ENCODE measurements at regions of chr11 and their contacts with region 1.

Region 1: GRCh38 chr11:47552566-47553416 is at the start of gene CELF1:
- DNase-seq: peak; percentile 93 to 96 (median 94)
- ATAC-seq: peak; percentile 94 to 99 (median 98)
- H3K4me3 ChIP-seq: peak within 1 kb of the TSS; percentile 68 to 100 (median 90)
- H3K27ac ChIP-seq: peak within 1 kb of the TSS; percentile 81 to 96 (median 91)
- H3K4me1 ChIP-seq: peaks cover 6 to 49% (median 26%) of the 10 kb centered on the region in 12 donors
- H3K27me3 ChIP-seq: no peaks in the 10 kb centered on the region
- CTCF ChIP-seq: peak; percentile 81 to 98 (median 97)
- POLR2A ChIP-seq: peak in 1 of 2 donors; percentile 54
- total RNA-seq, gene CELF1: 63.3 to 111 (median 88.6) TPM

Region 2: DNA sequence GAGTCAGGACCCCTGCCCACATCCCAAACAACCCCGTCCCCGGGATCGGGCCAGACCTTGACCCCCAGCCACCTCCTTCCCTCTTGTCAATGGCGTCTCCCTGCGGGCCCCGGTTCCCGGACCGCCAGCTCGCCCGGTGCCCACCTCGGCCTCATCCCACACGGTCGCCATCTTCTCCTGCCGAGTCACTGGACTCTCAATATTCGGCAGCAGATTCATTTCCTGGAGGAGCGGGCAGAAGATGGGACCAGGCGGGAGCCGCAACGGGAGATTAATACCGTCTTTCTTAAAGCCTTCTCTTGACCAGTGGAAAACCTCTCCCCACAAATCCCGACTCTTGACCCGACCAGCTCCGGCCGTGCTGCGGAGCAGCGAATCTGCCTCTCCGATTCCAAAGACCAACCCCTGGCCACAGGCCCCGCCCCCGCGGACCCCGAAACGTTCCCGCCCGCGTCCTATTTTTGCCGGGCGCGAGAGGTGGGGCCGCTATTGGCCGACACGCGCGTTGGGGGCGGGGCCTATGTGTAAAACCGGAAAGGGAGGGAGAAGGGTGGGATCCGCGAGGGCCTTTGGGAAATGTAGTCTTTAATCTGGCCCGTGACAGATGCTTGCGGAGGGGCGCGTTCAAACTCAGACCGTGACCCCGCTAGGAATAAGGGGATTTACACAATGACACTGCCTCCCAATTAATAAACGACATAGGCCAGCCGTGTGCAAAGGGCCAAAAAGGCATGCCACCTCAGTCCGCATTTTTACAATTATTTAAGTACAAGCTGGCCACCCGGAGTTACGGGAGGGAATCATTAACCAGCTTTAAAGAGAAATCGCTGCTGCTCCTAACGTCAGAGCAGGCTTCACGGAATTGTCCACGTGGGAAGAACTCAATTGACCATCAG is 126.5 kb before region 1 on chr11 and contains the start of gene PSMC3:
- intact Hi-C with region 1: loop called in 1 of 10 experiments (anchors 2 kb)
- DNase-seq: peak; percentile 98 to 99 (median 99)
- ATAC-seq: peak; percentile 95 to 99 (median 97)
- H3K4me3 ChIP-seq: peak within 1 kb of the TSS; percentile 69 to 97 (median 84)
- H3K27ac ChIP-seq: peak within 1 kb of the TSS; percentile 81 to 96 (median 92)
- H3K4me1 ChIP-seq: peaks cover 5 to 25% (median 14%) of the 10 kb centered on the region in 12 donors
- H3K27me3 ChIP-seq: no peaks in the 10 kb centered on the region
- CTCF ChIP-seq: peak in 1 of 12 donors; percentile 5
- POLR2A ChIP-seq: peak in 1 of 2 donors; percentile 55
- total RNA-seq, gene PSMC3: 121 to 215 (median 151) TPM

Region 3: DNA sequence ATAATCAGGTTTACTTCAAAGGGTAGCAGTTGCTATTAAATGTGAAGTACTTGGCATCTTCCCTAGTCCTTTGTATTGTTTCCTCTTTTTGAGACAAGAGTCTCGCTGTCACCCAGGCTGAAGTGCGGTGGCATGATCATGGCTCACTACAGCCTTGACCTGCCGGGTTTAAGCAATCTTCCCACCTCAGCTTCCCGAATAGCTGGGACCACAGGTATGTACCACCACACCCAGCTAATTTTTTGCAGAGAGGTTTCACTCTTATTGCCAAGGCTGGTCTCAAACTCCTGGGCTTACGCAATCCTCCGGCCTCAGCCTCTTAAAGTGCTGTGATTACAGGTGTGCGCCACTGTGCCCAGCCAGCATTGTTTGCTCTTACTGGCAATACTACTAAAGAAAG is 67.7 kb before region 1 on chr11:
- intact Hi-C with region 1: loop called in 4 of 10 experiments (anchors 5 to 10 kb)
- DNase-seq: no peak
- ATAC-seq: no peak
- H3K4me3 ChIP-seq: no peak overlapping the region
- H3K27ac ChIP-seq: no peak overlapping the region
- H3K4me1 ChIP-seq: peaks cover 0 to 32% (median 11%) of the 10 kb centered on the region in 12 donors
- H3K27me3 ChIP-seq: no peaks in the 10 kb centered on the region
- CTCF ChIP-seq: no peak
- POLR2A ChIP-seq: no peak

Region 4: GRCh38 chr11:47509077-47509536 is 43.7 kb before region 1 on chr11:
- intact Hi-C with region 1: loop called in 2 of 10 experiments (anchors 5 to 10 kb)
- DNase-seq: no peak
- ATAC-seq: peak in 1 of 4 donors; percentile 16
- H3K4me3 ChIP-seq: no peak overlapping the region
- H3K27ac ChIP-seq: peak overlapping the region in 3 of 12 donors; percentile 25 to 73 (median 29)
- H3K4me1 ChIP-seq: peaks cover 0 to 88% (median 62%) of the 10 kb centered on the region in 12 donors
- H3K27me3 ChIP-seq: no peaks in the 10 kb centered on the region
- CTCF ChIP-seq: no peak
- POLR2A ChIP-seq: no peak

Region 5: DNA sequence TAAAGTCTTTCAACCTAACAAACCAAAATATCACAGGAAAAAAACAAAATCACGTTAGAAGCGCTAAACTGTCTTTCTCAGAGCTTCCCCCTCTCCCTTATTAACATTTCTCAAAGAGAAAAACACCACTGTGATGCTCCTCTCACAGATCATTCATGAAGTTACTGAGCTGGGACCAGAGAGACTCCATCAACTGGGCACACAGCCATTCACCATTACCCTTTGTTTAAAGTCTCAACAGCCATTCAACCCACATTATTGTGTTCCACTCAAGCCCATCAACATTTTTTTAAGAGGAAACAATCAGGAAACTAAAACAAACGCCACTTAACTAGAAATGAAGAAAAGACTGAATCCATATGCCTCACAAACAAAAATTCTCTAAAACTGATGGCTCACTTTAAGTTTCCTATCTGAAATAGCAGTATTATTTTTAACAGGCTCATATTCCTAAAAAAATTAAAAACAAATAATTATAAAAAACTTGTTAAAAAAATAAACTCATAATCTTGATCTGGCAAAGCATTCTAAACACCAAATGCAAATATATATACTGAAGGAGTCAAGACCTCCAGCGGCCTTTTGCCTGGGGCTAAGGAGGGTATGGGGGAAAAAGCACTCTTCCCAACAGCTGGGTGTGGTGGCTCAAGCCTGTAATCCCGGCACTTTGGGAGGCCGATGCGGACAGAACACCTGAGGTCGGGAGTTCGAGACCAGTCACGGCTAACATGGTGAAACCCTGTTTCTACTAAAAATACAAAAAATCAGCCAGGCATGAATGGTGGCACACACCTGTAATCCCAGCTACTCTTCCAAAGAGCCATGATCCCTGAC is 13.8 kb before region 1 on chr11:
- intact Hi-C with region 1: no loop called
- DNase-seq: no peak
- ATAC-seq: peak in 1 of 4 donors; percentile 28
- H3K4me3 ChIP-seq: no peak overlapping the region
- H3K27ac ChIP-seq: peak overlapping the region in 2 of 12 donors; percentile 10 to 24
- H3K4me1 ChIP-seq: peaks cover 6 to 85% (median 61%) of the 10 kb centered on the region in 12 donors
- H3K27me3 ChIP-seq: no peaks in the 10 kb centered on the region
- CTCF ChIP-seq: no peak
- POLR2A ChIP-seq: no peak

Region 6: DNA sequence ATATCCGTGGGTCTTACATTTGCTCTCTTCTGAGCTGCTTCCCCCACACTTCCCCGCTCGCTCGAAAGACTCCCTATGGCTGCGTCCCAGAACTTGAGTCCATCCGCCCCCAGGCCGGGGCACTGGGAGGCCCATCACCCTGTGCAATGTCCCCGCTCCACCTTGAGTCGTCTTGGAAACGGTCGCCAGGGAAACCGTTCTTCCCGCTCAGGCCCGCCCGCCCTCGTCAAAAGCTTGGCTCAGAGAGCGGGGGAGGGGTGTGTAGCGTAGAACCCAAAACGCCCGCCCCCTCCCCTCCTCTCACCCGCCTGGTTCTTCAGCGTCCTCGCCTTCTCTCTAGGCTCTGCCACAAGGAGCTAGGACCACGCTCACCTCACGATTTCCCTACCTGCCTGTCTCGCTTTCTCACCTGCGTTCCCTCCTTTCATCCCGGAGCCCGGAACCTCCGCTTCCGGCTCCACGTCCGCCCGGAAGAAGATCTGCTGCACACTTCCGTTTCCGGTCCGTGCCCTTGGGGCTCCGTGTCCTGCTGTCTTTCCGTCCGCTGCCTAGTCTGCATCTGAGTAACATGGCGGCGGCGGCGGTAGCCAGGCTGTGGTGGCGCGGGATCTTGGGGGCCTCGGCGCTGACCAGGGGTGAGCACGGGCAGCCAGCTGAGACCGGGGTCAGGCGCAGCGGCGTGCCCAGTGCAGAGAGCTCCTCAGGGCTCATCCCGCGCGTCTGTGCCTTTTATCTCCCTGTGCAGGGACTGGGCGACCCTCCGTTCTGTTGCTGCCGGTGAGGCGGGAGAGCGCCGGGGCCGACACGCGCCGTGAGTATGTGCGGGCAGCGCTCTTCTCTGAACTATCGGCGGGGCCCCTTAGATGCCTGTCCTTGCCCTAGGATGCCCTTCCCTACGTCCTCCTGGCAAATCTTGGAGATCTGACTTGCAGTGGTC is 26.0 kb after region 1 on chr11 and contains the starts of genes KBTBD4 and NDUFS3:
- intact Hi-C with region 1: loop called in 1 of 10 experiments (anchors 2 kb)
- DNase-seq: peak; percentile 89 to 92 (median 90)
- ATAC-seq: peak; percentile 88 to 97 (median 94)
- H3K4me3 ChIP-seq: peak within 1 kb of the TSS; percentile 76 to 100 (median 96)
- H3K27ac ChIP-seq: peak within 1 kb of the TSS; percentile 67 to 95 (median 92)
- H3K4me1 ChIP-seq: peaks cover 9 to 37% (median 27%) of the 10 kb centered on the region in 12 donors
- H3K27me3 ChIP-seq: no peaks in the 10 kb centered on the region
- CTCF ChIP-seq: no peak
- POLR2A ChIP-seq: peak in 1 of 2 donors; percentile 47
- total RNA-seq, gene KBTBD4: 10.7 to 23.7 (median 15.7) TPM
- total RNA-seq, gene NDUFS3: 134 to 310 (median 236) TPM

Measured in heart left ventricle (tissue), 16 donors.